ENCODE measurements at regions of chr7 and their contacts with region 1.

Region 1: DNA sequence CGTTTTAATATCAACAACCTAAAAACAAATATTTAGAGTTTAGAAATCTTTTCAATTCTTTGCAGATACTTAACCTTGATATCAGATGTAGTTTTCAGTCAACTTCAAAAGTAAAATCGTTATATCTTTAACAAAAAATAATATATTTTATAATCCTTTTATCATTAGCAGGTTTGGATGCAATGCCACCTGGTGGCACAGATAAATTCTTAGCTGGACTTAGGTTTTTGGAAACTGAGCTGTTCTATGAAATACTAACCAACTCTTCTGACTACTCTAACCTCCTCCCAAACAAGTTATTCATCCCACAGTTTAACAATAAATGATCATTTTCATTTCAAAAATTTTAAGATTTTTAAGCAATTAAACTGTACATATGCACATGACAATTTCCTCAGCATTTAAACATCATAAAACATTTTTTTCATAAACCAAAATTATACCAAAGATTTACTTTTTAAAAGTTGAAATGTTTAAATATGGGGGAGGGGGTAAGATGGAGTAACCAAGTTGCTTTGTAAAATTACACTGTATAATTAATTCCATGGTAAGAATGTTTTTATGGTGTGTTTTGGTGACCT is 56.9 kb downstream of the HIBADH start:
- DNase-seq: no peak
- H3K4me3 ChIP-seq: no peak overlapping the region
- H3K27ac ChIP-seq: peak overlapping the region in 1 of 2 donors; percentile 45
- H3K4me1 ChIP-seq: no peaks in the 10 kb centered on the region
- H3K27me3 ChIP-seq: no peaks in the 10 kb centered on the region
- CTCF ChIP-seq: peak in 3 of 4 experiments; percentile 40 to 62 (median 55)
- POLR2A ChIP-seq: no peak

Region 2: GRCh38 chr7:27204851-27205337 is 400.9 kb before region 1 on chr7:
- intact Hi-C with region 1: loop called (anchors 5 kb)
- DNase-seq: no peak
- H3K4me3 ChIP-seq: peak overlapping the region; percentile 76 to 81
- H3K27ac ChIP-seq: peak overlapping the region; percentile 96 to 97
- H3K4me1 ChIP-seq: peaks cover 4% of the 10 kb centered on the region
- H3K27me3 ChIP-seq: no peaks in the 10 kb centered on the region
- CTCF ChIP-seq: no peak
- POLR2A ChIP-seq: no peak

Region 3: DNA sequence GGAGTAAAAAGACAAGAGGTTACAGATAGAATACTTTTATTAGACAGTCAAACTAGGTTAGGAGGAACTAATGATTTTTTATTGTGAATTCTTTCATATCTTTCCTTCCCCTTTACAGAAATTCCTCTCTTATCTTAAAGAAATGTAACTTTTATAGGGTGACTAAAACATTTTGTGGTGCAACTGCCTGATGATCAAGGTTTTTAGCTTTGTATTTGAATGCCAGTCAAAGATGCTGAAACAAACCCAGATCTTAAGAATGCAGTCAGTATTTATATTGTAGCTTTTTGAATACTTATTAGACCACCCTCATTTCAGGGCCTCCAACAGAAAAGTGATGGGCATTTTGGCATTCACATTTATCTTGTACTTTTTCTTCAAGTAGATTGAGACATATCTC is 161.6 kb after region 1 on chr7:
- intact Hi-C with region 1: no loop called
- DNase-seq: no peak
- H3K4me3 ChIP-seq: no peak overlapping the region
- H3K27ac ChIP-seq: no peak overlapping the region
- H3K4me1 ChIP-seq: no peaks in the 10 kb centered on the region
- H3K27me3 ChIP-seq: no peaks in the 10 kb centered on the region
- CTCF ChIP-seq: no peak
- POLR2A ChIP-seq: no peak

Region 4: DNA sequence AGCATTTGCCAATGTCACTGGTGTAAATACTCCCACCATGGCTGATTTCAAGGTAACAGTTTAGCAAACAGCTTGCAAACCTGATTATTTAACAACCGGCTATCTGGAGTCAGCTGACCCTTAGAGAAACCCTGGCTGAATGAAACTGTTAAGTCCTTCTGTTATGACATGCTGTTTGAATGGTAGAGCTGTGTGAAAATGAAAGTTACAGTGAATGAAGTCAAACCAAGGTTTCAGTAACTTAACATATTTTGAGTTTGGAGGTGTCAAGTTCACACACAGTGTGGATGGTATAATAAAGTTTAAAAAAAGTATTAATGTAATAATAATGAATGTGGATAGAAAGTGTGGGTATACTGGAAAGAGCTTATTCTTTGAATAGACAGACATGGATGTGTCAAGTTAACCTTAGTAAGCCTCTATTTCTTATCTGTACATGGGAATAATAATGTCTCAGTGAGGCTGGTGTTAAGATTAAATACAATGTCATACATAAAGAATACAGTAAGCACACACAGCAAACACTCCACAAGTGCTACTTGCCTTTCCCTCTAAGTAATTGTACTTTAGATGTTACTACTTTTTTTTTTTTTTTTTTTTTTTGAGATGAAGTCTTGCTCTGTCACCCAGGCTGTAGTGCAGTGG is 284.5 kb after region 1 on chr7:
- intact Hi-C with region 1: no loop called
- DNase-seq: no peak
- H3K4me3 ChIP-seq: no peak overlapping the region
- H3K27ac ChIP-seq: no peak overlapping the region
- H3K4me1 ChIP-seq: no peaks in the 10 kb centered on the region
- H3K27me3 ChIP-seq: no peaks in the 10 kb centered on the region
- CTCF ChIP-seq: no peak
- POLR2A ChIP-seq: no peak

Region 5: GRCh38 chr7:28020302-28020940 is 414.6 kb after region 1 on chr7:
- intact Hi-C with region 1: loop called (anchors 10 kb)
- DNase-seq: peak; percentile 76
- H3K4me3 ChIP-seq: no peak overlapping the region
- H3K27ac ChIP-seq: no peak overlapping the region
- H3K4me1 ChIP-seq: no peaks in the 10 kb centered on the region
- H3K27me3 ChIP-seq: no peaks in the 10 kb centered on the region
- CTCF ChIP-seq: peak; percentile 59 to 91 (median 90)
- POLR2A ChIP-seq: no peak

Measured in prostate gland (tissue), 2 donors.